ENCODE measurements at regions of chr17 and their contacts with region 1.

Region 1: GRCh38 chr17:49031965-49032928 is 35.1 kb downstream of the IGF2BP1 start:
- DNase-seq: no peak
- H3K4me3 ChIP-seq: no peak overlapping the region
- H3K27ac ChIP-seq: no peak overlapping the region
- H3K4me1 ChIP-seq: no peaks in the 10 kb centered on the region
- H3K27me3 ChIP-seq: peaks cover 71% of the 10 kb centered on the region
- CTCF ChIP-seq: peak; percentile 79

Region 2: DNA sequence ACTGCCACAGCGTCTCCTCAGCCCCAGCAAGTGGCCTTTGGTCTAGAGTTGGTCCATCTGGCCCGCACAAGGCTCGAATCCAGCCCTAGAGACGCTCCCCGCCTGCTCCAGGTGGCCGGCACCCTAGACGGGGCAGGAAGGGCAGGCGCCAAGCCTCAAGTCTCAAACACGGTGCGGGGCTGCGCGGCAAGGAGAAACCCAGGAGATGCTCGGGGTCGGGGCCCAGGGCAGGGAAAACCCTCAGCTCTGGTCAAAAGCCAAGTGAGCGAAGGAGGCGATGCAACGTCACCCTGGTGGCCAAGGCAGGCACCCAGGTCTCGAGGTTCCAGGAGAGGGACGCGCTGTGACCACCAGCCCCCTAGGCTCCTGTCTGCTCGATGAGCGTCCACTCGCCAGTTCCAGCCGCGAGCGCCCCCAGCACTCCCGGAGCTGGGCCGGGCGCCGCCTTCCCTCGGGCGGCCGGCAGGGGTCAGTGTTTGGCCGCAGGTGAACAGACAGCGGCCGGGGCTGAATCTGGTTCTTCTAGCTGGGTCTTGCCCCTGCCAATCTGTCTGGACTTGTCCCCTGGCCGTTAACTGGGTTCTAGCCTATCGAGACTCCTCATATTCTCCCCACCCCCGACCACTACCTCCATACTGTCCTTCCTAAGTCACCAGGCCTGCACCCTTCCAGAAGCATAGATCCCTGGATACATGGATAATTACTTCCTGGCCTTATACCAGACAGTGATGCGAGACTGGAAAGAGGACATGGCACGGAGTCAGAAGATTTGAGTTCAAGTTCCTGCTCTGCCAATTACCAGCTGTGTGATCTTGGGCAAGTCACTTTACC is 353.9 kb before region 1 on chr17:
- intact Hi-C with region 1: loop called (anchors 10 kb)
- DNase-seq: peak; percentile 53
- H3K4me3 ChIP-seq: no peak overlapping the region
- H3K27ac ChIP-seq: no peak overlapping the region
- H3K4me1 ChIP-seq: peaks cover 5% of the 10 kb centered on the region
- H3K27me3 ChIP-seq: peaks cover 100% of the 10 kb centered on the region
- CTCF ChIP-seq: peak; percentile 93

Measured in left ventricle myocardium inferior (tissue), 1 donor.